Caco-2 (cell line): ENCODE measurements at regions of chrX and their contacts with region 1.

Region 1: GRCh38 chrX:49172280-49172780 is 632 bp downstream of the PLP2 start:
- DNase-seq: peak in 1 of 2 experiments; percentile 17
- H3K4me3 ChIP-seq: peak overlapping the region; percentile 63
- H3K4me3 Mint-ChIP-seq: peak overlapping the region; percentile 86
- H3K27ac Mint-ChIP-seq: no peak overlapping the region
- H3K4me1 ChIP-seq: no peaks in the 10 kb centered on the region
- H3K4me1 Mint-ChIP-seq: peaks cover 14% of the 10 kb centered on the region
- H3K27me3 ChIP-seq: no peaks in the 10 kb centered on the region
- H3K27me3 Mint-ChIP-seq: no peaks in the 10 kb centered on the region
- CTCF ChIP-seq: no peak

Region 2: GRCh38 chrX:49029876-49030275 is 142.5 kb before region 1 on chrX:
- CTCF ChIA-PET with region 1: no interaction called
- POLR2A ChIA-PET with region 1: no interaction called
- intact Hi-C with region 1: no loop called
- DNase-seq: peak; percentile 59 to 80
- H3K4me3 ChIP-seq: no peak overlapping the region
- H3K4me3 Mint-ChIP-seq: no peak overlapping the region
- H3K27ac Mint-ChIP-seq: no peak overlapping the region
- H3K4me1 ChIP-seq: no peaks in the 10 kb centered on the region; the same call in 1 of the 2 replicates
- H3K4me1 Mint-ChIP-seq: peaks cover 6% of the 10 kb centered on the region
- H3K27me3 ChIP-seq: no peaks in the 10 kb centered on the region
- H3K27me3 Mint-ChIP-seq: no peaks in the 10 kb centered on the region
- CTCF ChIP-seq: no peak

Region 3: DNA sequence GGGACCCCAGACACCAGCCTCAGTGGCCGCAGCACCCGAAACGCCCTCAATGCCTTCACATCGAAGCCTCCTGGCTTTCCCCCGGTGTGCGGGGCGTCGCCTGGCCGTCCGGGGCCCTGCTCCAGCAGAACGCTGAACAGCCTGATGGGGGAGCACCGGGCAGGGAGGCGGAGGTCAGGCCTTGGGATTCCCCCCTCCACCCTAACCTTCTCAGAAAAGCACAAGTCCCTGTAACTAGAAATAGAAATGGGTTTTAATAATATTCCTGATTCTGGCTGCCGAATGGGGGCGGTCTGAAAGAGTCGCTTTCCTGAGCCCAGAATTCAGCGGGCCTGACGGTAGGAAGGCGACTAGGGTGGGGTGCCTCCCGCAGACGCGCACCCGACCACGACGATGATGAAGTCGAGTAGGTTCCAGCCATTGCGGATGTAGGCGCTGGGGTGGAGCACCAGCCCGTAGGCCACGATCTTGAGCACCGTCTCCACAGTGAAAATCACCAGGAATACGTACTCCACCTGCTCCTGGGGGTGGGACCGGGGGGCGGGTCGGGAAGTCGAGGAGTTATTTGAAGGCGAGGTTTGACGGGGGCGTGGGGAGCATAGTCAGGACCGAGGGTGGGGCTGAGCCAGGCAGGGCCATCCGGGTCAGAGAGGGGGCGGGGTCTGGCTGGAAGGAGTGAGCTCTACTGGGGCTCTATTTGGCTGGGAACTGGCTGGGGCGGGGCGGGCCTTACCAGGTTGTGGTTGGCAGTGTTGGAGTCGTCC is 58.3 kb after region 1 on chrX:
- CTCF ChIA-PET with region 1: no interaction called
- POLR2A ChIA-PET with region 1: no interaction called
- intact Hi-C with region 1: loop called (anchors 10 kb)
- DNase-seq: peak; percentile 71 to 74
- H3K4me3 ChIP-seq: peak overlapping the region; percentile 46
- H3K4me3 Mint-ChIP-seq: peak overlapping the region; percentile 68
- H3K27ac Mint-ChIP-seq: no peak overlapping the region
- H3K4me1 ChIP-seq: no peaks in the 10 kb centered on the region
- H3K4me1 Mint-ChIP-seq: no peaks in the 10 kb centered on the region
- H3K27me3 ChIP-seq: no peaks in the 10 kb centered on the region
- H3K27me3 Mint-ChIP-seq: no peaks in the 10 kb centered on the region
- CTCF ChIP-seq: peak; percentile 10 to 21